ENCODE measurements at regions of chr11 and their contacts with region 1.

Region 1: DNA sequence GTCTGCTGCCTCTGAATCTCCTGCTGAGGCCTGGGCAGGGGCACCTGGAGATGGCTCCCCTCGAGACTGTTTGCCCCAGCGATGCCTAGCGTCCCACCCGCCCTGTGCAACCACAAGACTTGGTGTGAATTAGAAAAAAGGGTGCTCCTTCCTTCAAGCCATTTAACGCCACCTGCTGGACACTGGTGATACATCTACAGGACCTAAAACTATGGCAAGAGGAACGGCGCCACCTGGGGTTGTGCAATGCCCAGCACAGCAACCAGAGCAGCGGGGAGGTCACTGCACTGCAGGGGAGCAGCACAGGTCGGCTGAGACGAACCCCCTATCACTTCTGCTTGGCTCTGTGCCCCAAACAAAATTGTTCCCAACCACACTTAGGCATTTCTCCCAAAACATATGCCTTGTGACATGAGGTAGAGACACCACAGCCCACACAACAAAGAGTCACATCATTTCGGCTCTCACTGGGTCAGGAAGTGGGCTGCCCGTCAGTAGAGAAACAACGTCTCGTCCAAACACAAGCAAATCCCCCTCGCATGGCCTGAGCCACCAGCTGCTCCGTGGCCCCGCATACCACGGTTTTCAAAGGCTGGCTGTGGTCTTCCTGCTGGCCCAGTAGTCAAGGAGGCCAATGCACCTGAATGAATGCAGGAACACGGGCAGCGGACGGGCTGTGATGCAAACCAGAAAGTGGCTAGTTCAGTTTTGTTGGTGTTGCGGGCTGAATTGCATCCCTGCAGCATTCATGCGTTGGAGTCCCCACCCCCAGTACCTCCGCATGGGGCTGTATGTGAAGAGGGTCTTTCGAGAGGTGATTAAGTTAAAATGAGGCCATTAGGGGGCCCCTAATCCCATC is 171.9 kb downstream of the SHANK2 start:
- DNase-seq: peak; percentile 85
- H3K4me3 ChIP-seq: no peak overlapping the region
- H3K27ac ChIP-seq: no peak overlapping the region
- H3K4me1 ChIP-seq: no peaks in the 10 kb centered on the region
- H3K27me3 ChIP-seq: peaks cover 0 to 2% (median 0%) of the 10 kb centered on the region in 3 donors
- CTCF ChIP-seq: peak; percentile 50 to 79 (median 68)
- EP300 ChIP-seq: no peak
- POLR2A ChIP-seq: no peak

Region 2: DNA sequence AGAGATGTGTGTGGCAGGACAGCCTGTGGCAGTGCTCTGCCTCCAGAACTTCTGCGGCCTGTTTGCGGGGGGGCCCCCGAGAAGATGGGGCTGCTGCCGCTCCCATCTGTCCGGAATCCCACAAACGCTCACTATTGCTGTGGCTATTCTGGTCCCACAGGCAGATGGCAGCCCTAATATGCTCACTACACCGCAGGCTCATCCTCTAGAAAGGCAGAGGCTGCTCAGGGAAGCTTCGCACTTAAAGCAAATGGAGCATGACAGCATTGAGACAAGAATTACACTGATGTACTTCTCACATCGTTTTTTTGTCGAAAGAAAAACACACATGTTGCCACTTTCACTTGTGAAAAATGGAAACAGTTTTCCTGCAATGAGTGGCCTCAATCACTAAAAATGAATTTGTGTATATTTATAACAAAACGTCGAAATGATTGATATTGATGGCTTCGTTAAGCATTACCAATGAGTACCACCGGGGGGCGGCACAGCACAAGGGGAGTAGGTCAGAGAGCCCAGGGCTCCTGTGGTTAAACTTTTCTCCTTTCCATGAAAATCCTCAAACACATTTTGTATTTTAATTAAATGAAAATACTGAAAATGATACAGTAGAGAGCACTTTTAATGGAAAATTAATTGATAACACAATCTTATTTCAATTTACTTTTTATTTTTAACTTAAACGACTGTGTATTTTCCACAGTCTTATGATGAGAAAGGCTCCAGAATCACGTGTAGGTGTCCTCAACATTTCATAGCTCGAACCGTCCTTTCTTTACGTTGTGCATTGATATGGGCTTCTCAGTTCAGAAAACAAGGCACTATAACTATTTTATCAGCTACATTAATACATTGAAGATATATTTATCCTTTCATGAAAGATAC is 613.0 kb before region 1 on chr11:
- intact Hi-C with region 1: loop called (anchors 2 kb)
- DNase-seq: no peak
- H3K4me3 ChIP-seq: no peak overlapping the region
- H3K27ac ChIP-seq: no peak overlapping the region
- H3K4me1 ChIP-seq: peaks cover 0 to 7% (median 0%) of the 10 kb centered on the region in 4 donors
- H3K27me3 ChIP-seq: no peaks in the 10 kb centered on the region
- CTCF ChIP-seq: peak; percentile 60 to 86 (median 82)
- EP300 ChIP-seq: no peak
- POLR2A ChIP-seq: no peak

Region 3: DNA sequence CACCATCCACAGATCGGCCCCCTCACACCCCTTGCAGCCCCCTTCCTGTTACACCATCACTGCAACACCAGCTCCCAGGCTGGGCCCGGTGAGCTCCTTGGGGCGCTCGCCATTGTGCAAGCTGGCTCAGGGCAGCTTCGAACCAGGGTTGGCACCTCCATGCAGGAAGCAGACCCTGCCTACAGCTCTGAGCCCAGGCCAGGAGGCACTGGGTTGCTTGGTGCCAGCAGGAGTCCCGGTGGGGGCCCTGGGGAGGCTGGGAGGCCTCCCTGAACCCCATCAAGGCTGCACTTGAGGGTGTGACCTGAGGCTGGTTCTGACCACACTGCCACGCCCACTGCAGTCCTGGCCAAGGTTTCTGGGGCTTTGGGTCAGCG is 265.0 kb before region 1 on chr11:
- intact Hi-C with region 1: loop called (anchors 2 kb)
- DNase-seq: no peak
- H3K4me3 ChIP-seq: no peak overlapping the region
- H3K27ac ChIP-seq: no peak overlapping the region
- H3K4me1 ChIP-seq: peaks cover 0 to 5% (median 0%) of the 10 kb centered on the region in 4 donors
- H3K27me3 ChIP-seq: no peaks in the 10 kb centered on the region
- CTCF ChIP-seq: no peak
- EP300 ChIP-seq: no peak
- POLR2A ChIP-seq: no peak

Region 4: DNA sequence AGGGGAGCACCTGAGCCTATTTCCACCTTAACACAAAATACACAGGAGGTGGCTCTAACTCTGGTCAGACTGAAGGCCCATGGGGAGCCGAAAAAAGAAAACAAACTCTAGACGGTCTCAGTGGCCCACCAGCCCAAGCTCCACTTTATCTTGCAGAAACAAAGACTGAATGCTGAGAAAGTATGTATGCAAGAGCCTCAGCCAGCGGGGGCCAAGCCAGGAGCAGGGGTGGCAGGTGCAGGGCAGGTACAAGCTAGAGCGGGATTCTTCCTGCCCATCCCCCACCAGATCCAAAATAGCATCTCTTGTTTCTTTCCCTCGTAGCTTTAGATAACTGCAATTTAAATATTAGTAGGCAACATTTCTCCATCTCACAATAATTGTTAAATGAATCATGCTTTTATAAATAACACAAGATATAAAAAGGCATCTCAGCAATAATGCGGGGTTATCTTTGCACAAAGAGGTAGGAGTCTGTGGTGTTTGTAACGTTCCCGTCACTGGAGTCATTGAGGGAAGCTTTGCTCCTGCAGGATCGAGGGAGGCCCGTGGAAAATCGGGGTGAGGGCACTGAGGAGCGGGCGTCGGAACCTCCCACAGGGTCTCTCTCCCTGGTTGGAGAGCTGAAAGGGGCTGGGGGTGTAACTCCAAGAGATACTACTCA is 246.1 kb before region 1 on chr11:
- intact Hi-C with region 1: loop called (anchors 5 kb)
- DNase-seq: no peak
- H3K4me3 ChIP-seq: no peak overlapping the region
- H3K27ac ChIP-seq: no peak overlapping the region
- H3K4me1 ChIP-seq: no peaks in the 10 kb centered on the region
- H3K27me3 ChIP-seq: peaks cover 0 to 8% (median 0%) of the 10 kb centered on the region in 3 donors
- CTCF ChIP-seq: no peak
- EP300 ChIP-seq: no peak
- POLR2A ChIP-seq: no peak